Naive thymus-derived CD4-positive, alpha-beta T cell (primary cell): ENCODE measurements at regions of chr12 and their contacts with region 1.

Region 1: GRCh38 chr12:56117778-56118687 is at the start of gene ZC3H10:
- DNase-seq: peak; percentile 80 to 99 (median 96)
- ATAC-seq: peak; percentile 89
- H3K4me3 ChIP-seq: peak within 1 kb of the TSS; percentile 95
- H3K4me3 Mint-ChIP-seq: peak within 1 kb of the TSS; percentile 87 to 100 (median 96)
- H3K27ac ChIP-seq: peak within 1 kb of the TSS; percentile 93
- H3K27ac Mint-ChIP-seq: peak within 1 kb of the TSS; percentile 95 to 99 (median 98)
- H3K4me1 ChIP-seq: peaks cover 24 to 25% of the 10 kb centered on the region in 2 donors
- H3K4me1 Mint-ChIP-seq: peaks cover 24 to 47% (median 34%) of the 10 kb centered on the region in 7 donors
- H3K27me3 ChIP-seq: no peaks in the 10 kb centered on the region
- H3K27me3 Mint-ChIP-seq: no peaks in the 10 kb centered on the region
- total RNA-seq, gene ZC3H10: 7.8 to 16.3 (median 13.3) TPM

Region 2: GRCh38 chr12:55973598-55974307 is 144.3 kb before region 1 on chr12 and contains the start of gene RAB5B:
- CTCF ChIA-PET with region 1: no interaction called
- POLR2A ChIA-PET with region 1: interaction called, 19 read pairs
- intact Hi-C with region 1: loop called (anchors 1 kb)
- DNase-seq: peak; percentile 81 to 100 (median 98)
- ATAC-seq: peak; percentile 92
- H3K4me3 ChIP-seq: peak within 1 kb of the TSS; percentile 84
- H3K4me3 Mint-ChIP-seq: no peak within 1 kb of the TSS
- H3K27ac ChIP-seq: peak within 1 kb of the TSS; percentile 88
- H3K27ac Mint-ChIP-seq: no peak within 1 kb of the TSS
- H3K4me1 ChIP-seq: peaks cover 8 to 19% of the 10 kb centered on the region in 2 donors
- H3K4me1 Mint-ChIP-seq: peaks cover 18 to 31% (median 26%) of the 10 kb centered on the region in 7 donors
- H3K27me3 ChIP-seq: no peaks in the 10 kb centered on the region
- H3K27me3 Mint-ChIP-seq: no peaks in the 10 kb centered on the region
- total RNA-seq, gene RAB5B: 45.2 to 109 (median 62.7) TPM

Region 3: GRCh38 chr12:56137853-56138571 is 20.0 kb after region 1 on chr12:
- CTCF ChIA-PET with region 1: interaction called, 4 read pairs
- POLR2A ChIA-PET with region 1: interaction called, 11 read pairs
- intact Hi-C with region 1: no loop called
- DNase-seq: peak in 4 of 9 donors; percentile 18 to 38 (median 26)
- ATAC-seq: peak; percentile 52
- H3K4me3 ChIP-seq: no peak overlapping the region
- H3K4me3 Mint-ChIP-seq: peak overlapping the region; percentile 31 to 82 (median 70)
- H3K27ac ChIP-seq: peak overlapping the region; percentile 62
- H3K27ac Mint-ChIP-seq: peak overlapping the region; percentile 67 to 92 (median 87)
- H3K4me1 ChIP-seq: peaks cover 5 to 45% of the 10 kb centered on the region in 2 donors
- H3K4me1 Mint-ChIP-seq: peaks cover 49 to 75% (median 61%) of the 10 kb centered on the region in 7 donors
- H3K27me3 ChIP-seq: no peaks in the 10 kb centered on the region
- H3K27me3 Mint-ChIP-seq: no peaks in the 10 kb centered on the region

Region 4: DNA sequence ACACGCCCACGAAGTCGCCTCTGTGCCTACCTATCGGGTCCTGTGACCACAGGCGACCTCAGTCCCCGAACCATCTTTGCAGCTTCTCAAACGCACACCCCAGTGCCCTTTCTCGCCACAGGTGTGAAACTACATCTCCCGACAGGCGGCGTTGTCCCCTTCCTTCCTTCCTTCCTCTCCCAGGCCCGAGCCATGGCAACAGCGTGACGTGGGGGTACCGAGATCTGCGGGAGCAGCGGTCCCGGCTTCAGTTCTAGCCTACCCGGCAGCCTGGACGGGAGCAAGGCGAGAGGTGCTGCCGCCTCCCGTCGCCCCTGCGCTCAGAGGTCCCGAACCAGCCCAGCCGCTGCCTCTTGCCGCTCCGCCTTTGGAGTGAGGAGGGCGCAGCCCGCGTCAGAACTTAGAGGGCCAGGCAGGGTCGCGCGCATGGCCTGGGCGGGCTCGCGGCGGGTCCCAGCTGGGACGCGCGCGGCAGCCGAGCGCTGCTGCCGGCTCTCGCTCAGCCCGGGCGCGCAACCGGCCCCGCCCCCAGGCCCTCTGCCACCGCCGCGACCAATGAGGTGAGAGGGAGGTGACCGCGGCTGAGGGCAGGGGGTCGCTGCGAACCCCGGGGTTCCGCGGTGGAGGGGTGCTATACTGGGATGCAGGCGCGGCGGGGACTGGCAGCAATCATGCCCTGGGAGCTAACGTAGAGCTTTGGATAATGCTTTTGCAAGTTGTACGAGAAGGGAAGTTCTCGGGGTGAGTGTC is 148.8 kb after region 1 on chr12 and contains the start of gene COQ10A:
- CTCF ChIA-PET with region 1: interaction called, 4 read pairs
- POLR2A ChIA-PET with region 1: interaction called, 5 read pairs
- intact Hi-C with region 1: loop called (anchors 2 kb)
- DNase-seq: peak; percentile 78 to 92 (median 89)
- ATAC-seq: peak; percentile 93
- H3K4me3 ChIP-seq: peak within 1 kb of the TSS; percentile 88
- H3K4me3 Mint-ChIP-seq: peak within 1 kb of the TSS; percentile 83 to 100 (median 96)
- H3K27ac ChIP-seq: peak within 1 kb of the TSS; percentile 94
- H3K27ac Mint-ChIP-seq: peak within 1 kb of the TSS; percentile 89 to 97 (median 94)
- H3K4me1 ChIP-seq: peaks cover 0 to 8% of the 10 kb centered on the region in 2 donors
- H3K4me1 Mint-ChIP-seq: peaks cover 0 to 22% (median 20%) of the 10 kb centered on the region in 7 donors
- H3K27me3 ChIP-seq: no peaks in the 10 kb centered on the region
- H3K27me3 Mint-ChIP-seq: peaks cover 0 to 2% (median 0%) of the 10 kb centered on the region in 5 donors
- total RNA-seq, gene COQ10A: 22.5 to 39.4 (median 31.5) TPM

Region 5: DNA sequence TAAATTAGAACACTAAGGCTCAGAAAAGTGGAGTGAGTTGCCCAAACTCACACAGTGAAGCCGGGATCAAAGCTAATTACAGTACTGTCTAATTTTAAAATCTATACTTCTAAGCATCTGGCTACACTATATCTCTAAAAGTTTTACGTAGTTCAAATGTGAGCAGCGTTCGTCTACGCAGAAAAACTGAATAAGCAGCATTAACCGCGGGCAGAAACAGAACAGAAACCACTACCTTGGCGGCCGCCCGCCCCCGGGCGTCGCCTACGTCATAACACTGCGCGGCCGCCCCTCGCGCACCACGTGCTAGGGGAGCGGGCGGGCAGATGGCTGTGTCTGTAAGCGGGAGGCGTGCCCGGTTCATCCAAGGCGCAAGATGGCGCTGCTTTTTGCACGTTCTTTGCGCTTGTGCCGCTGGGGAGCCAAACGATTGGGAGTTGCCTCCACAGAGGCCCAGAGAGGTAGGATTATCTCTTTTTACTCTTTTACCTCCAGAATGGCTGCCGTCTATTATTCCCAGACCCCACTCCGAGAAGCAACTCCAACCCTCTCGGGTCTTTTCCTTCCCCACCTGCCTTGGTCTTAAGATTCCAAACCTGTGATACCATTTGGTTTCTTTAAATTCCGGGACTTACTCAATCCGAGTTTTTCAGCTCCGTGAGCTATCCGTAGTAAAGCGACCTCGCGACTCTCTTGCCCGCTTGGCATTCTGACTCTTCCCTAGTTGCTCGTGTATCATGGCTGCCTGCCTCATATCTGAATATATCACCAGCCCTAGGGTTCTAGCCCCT is 350.4 kb after region 1 on chr12 and contains the start of gene SPRYD4:
- CTCF ChIA-PET with region 1: interaction called, 6 read pairs
- POLR2A ChIA-PET with region 1: interaction called, 13 read pairs
- intact Hi-C with region 1: loop called (anchors 1 kb)
- DNase-seq: peak; percentile 89 to 97 (median 96)
- ATAC-seq: peak; percentile 99
- H3K4me3 ChIP-seq: peak within 1 kb of the TSS; percentile 99
- H3K4me3 Mint-ChIP-seq: peak within 1 kb of the TSS; percentile 90 to 99 (median 97)
- H3K27ac ChIP-seq: peak within 1 kb of the TSS; percentile 87
- H3K27ac Mint-ChIP-seq: peak within 1 kb of the TSS; percentile 92 to 99 (median 98)
- H3K4me1 ChIP-seq: peaks cover 12 to 20% of the 10 kb centered on the region in 2 donors
- H3K4me1 Mint-ChIP-seq: peaks cover 6 to 51% (median 26%) of the 10 kb centered on the region in 7 donors
- H3K27me3 ChIP-seq: no peaks in the 10 kb centered on the region
- H3K27me3 Mint-ChIP-seq: no peaks in the 10 kb centered on the region
- total RNA-seq, gene SPRYD4: 5.2 to 7.5 (median 7.2) TPM

Region 6: GRCh38 chr12:57520053-57520871 is 1402.2 kb after region 1 on chr12 and contains the start of gene DDIT3:
- CTCF ChIA-PET with region 1: no interaction called
- POLR2A ChIA-PET with region 1: no interaction called
- intact Hi-C with region 1: loop called in 1 of 2 experiments (anchors 2 kb)
- DNase-seq: peak; percentile 98 to 99 (median 99)
- ATAC-seq: peak; percentile 89
- H3K4me3 ChIP-seq: peak within 1 kb of the TSS; percentile 100
- H3K4me3 Mint-ChIP-seq: peak within 1 kb of the TSS; percentile 89 to 99 (median 98)
- H3K27ac ChIP-seq: peak within 1 kb of the TSS; percentile 95
- H3K27ac Mint-ChIP-seq: peak within 1 kb of the TSS; percentile 97 to 100 (median 99)
- H3K4me1 ChIP-seq: peaks cover 32 to 41% of the 10 kb centered on the region in 2 donors
- H3K4me1 Mint-ChIP-seq: peaks cover 47 to 80% (median 56%) of the 10 kb centered on the region in 7 donors
- H3K27me3 ChIP-seq: no peaks in the 10 kb centered on the region
- H3K27me3 Mint-ChIP-seq: peaks cover 0 to 7% (median 0%) of the 10 kb centered on the region in 5 donors
- total RNA-seq, gene DDIT3: 19.6 to 124 (median 51.6) TPM